Heart right ventricle (tissue), 16 donors: ENCODE measurements at regions of chr15 and their contacts with region 1.

Region 1: GRCh38 chr15:42375941-42376340 is 16.6 kb downstream of the CAPN3 start:
- DNase-seq: no peak
- ATAC-seq: no peak
- H3K4me3 ChIP-seq: no peak overlapping the region
- H3K27ac ChIP-seq: no peak overlapping the region
- H3K4me1 ChIP-seq: peaks cover 0 to 12% (median 4%) of the 10 kb centered on the region in 9 donors
- H3K27me3 ChIP-seq: no peaks in the 10 kb centered on the region
- CTCF ChIP-seq: no peak

Region 2: GRCh38 chr15:42094512-42094963 is 281.4 kb before region 1 on chr15 and contains the start of gene PLA2G4D:
- intact Hi-C with region 1: no loop called
- DNase-seq: no peak
- ATAC-seq: no peak
- H3K4me3 ChIP-seq: no peak within 1 kb of the TSS
- H3K27ac ChIP-seq: no peak within 1 kb of the TSS
- H3K4me1 ChIP-seq: peaks cover 0 to 9% (median 0%) of the 10 kb centered on the region in 9 donors
- H3K27me3 ChIP-seq: no peaks in the 10 kb centered on the region
- CTCF ChIP-seq: no peak
- total RNA-seq, gene PLA2G4D: not detected

Region 3: GRCh38 chr15:42332331-42332730 is 43.6 kb before region 1 on chr15:
- intact Hi-C with region 1: loop called in 1 of 10 experiments (anchors 5 kb)
- DNase-seq: no peak
- ATAC-seq: no peak
- H3K4me3 ChIP-seq: no peak overlapping the region
- H3K27ac ChIP-seq: no peak overlapping the region
- H3K4me1 ChIP-seq: peaks cover 0 to 11% (median 0%) of the 10 kb centered on the region in 9 donors
- H3K27me3 ChIP-seq: no peaks in the 10 kb centered on the region
- CTCF ChIP-seq: no peak